CD4-positive, alpha-beta T cell (primary cell): ENCODE measurements at regions of chr1 and their contacts with region 1.

Region 1: DNA sequence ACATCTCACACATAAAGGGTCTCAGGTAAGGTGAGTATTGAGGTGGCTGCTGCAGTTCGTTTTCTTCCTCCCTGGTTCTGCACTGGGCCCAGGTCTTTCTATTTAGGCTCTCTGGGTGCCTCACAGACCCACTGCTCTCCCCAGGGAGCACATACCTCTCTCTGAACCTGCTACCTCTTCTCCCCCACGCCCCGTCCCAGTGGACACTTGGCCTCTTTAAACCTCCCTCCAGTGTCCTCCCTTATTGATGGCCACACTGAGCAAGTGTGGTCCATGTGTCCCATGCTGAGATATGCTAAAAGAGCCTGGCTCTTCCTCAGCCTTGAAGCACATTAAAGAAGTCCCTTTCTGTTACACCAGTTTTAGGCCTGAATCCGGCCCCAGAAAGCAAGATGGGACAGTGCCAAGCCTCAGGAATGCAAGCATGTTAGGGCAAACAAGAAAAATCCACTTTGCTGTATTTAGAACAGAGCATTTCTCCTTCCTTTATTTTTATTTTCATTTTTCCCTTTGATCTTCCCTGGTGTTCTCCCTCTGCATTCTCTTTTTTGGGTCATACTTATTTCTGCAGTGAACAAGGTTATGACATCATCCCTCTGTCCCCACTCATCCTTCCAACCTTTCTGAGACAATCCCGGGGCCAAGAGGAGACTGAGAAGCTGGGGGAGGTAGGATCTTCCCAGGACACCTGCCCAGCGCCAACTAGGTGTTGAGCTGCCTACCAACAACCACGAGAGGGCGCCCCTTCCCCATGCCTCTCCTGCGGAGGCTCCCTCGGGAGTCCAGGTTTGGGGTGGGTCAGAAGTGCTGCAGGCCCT is 5.0 kb upstream of the CHI3L2 start:
- DNase-seq: peak; percentile 59 to 90 (median 74)
- ATAC-seq: peak; percentile 21
- H3K4me3 ChIP-seq: peak overlapping the region; percentile 42
- H3K4me3 Mint-ChIP-seq: peak overlapping the region; percentile 85
- H3K27ac ChIP-seq: peak overlapping the region; percentile 70 to 88
- H3K27ac Mint-ChIP-seq: peak overlapping the region; percentile 98
- H3K4me1 ChIP-seq: peaks cover 91% of the 10 kb centered on the region
- H3K4me1 Mint-ChIP-seq: peaks cover 97% of the 10 kb centered on the region
- H3K27me3 ChIP-seq: no peaks in the 10 kb centered on the region
- H3K27me3 Mint-ChIP-seq: no peaks in the 10 kb centered on the region
- CTCF ChIP-seq: peak; percentile 93

Region 2: GRCh38 chr1:110936567-110936966 is 285.9 kb before region 1 on chr1:
- CTCF ChIA-PET with region 1: no interaction called
- POLR2A ChIA-PET with region 1: no interaction called
- intact Hi-C with region 1: no loop called
- DNase-seq: no peak
- ATAC-seq: no peak
- H3K4me3 ChIP-seq: no peak overlapping the region
- H3K4me3 Mint-ChIP-seq: no peak overlapping the region
- H3K27ac ChIP-seq: no peak overlapping the region
- H3K27ac Mint-ChIP-seq: no peak overlapping the region
- H3K4me1 ChIP-seq: no peaks in the 10 kb centered on the region
- H3K4me1 Mint-ChIP-seq: no peaks in the 10 kb centered on the region
- H3K27me3 ChIP-seq: no peaks in the 10 kb centered on the region
- H3K27me3 Mint-ChIP-seq: no peaks in the 10 kb centered on the region
- CTCF ChIP-seq: no peak

Region 3: GRCh38 chr1:111030590-111030989 is 191.9 kb before region 1 on chr1:
- CTCF ChIA-PET with region 1: no interaction called
- POLR2A ChIA-PET with region 1: no interaction called
- intact Hi-C with region 1: loop called in 1 of 2 experiments (anchors 2 kb)
- DNase-seq: peak in 13 of 14 experiments; percentile 7 to 79 (median 29)
- ATAC-seq: no peak
- H3K4me3 ChIP-seq: no peak overlapping the region
- H3K4me3 Mint-ChIP-seq: no peak overlapping the region
- H3K27ac ChIP-seq: no peak overlapping the region
- H3K27ac Mint-ChIP-seq: no peak overlapping the region
- H3K4me1 ChIP-seq: no peaks in the 10 kb centered on the region
- H3K4me1 Mint-ChIP-seq: peaks cover 5% of the 10 kb centered on the region
- H3K27me3 ChIP-seq: no peaks in the 10 kb centered on the region
- H3K27me3 Mint-ChIP-seq: peaks cover 17% of the 10 kb centered on the region
- CTCF ChIP-seq: peak; percentile 96

Region 4: DNA sequence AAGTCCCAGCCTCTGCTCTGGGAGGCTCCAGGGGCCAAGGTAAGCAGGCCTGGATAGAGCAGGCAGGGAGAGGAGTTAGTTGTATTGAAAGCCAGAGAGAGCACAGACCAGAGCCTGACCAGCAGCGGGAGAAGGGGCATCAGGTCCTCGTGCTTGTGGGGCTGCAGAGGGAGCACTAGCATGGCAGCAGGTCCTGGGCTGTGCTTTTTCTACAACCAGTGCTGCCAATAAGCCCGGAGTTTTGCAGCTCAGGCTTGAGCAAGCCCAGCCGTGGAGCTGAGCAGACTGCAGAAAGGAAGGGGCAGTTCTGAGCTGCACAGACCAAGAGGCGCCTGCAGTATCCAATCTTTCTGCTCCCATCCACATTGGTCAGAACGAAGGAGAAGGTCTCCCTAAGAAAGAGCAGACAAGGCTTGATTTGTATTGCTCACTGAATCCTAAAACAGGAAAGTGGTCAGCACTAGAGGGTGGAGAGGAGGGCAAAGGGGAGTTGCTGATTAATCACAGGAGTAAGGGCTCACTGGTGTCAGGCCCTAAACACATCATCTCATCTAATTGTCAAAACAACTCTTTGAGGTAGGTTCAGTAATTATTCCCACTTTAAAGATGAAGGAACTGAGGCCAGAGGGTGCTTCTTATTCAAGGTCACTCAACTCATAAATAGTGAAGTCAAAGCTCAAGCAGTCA is 24.8 kb before region 1 on chr1:
- CTCF ChIA-PET with region 1: interaction called, 135 read pairs
- POLR2A ChIA-PET with region 1: interaction called, 756 read pairs
- intact Hi-C with region 1: loop called in 1 of 2 experiments (anchors 2 kb)
- DNase-seq: peak in 13 of 14 experiments; percentile 49 to 91 (median 73)
- ATAC-seq: no peak
- H3K4me3 ChIP-seq: peak overlapping the region; percentile 79
- H3K4me3 Mint-ChIP-seq: peak overlapping the region; percentile 99
- H3K27ac ChIP-seq: peak overlapping the region; percentile 70 to 97
- H3K27ac Mint-ChIP-seq: peak overlapping the region; percentile 90
- H3K4me1 ChIP-seq: peaks cover 86% of the 10 kb centered on the region
- H3K4me1 Mint-ChIP-seq: peaks cover 88% of the 10 kb centered on the region
- H3K27me3 ChIP-seq: no peaks in the 10 kb centered on the region
- H3K27me3 Mint-ChIP-seq: no peaks in the 10 kb centered on the region
- CTCF ChIP-seq: no peak

Region 5: GRCh38 chr1:111346089-111346885 is 123.8 kb after region 1 on chr1:
- CTCF ChIA-PET with region 1: interaction called, 3 read pairs
- POLR2A ChIA-PET with region 1: interaction called, 7 read pairs
- intact Hi-C with region 1: loop called (anchors 5 kb)
- DNase-seq: peak; percentile 76 to 97 (median 86)
- ATAC-seq: peak; percentile 88
- H3K4me3 ChIP-seq: peak overlapping the region; percentile 71
- H3K4me3 Mint-ChIP-seq: peak overlapping the region; percentile 88
- H3K27ac ChIP-seq: peak overlapping the region; percentile 43 to 73
- H3K27ac Mint-ChIP-seq: peak overlapping the region; percentile 85
- H3K4me1 ChIP-seq: peaks cover 14% of the 10 kb centered on the region
- H3K4me1 Mint-ChIP-seq: peaks cover 29% of the 10 kb centered on the region
- H3K27me3 ChIP-seq: no peaks in the 10 kb centered on the region
- H3K27me3 Mint-ChIP-seq: no peaks in the 10 kb centered on the region
- CTCF ChIP-seq: peak; percentile 30

Region 6: GRCh38 chr1:111448918-111449702 is 226.6 kb after region 1 on chr1 and contains the starts of genes ATP5PB and WDR77:
- CTCF ChIA-PET with region 1: interaction called, 4 read pairs
- POLR2A ChIA-PET with region 1: no interaction called
- intact Hi-C with region 1: loop called in 1 of 2 experiments (anchors 2 kb)
- DNase-seq: peak; percentile 73 to 99 (median 84)
- ATAC-seq: peak; percentile 95
- H3K4me3 ChIP-seq: peak within 1 kb of the TSS; percentile 75
- H3K4me3 Mint-ChIP-seq: peak within 1 kb of the TSS; percentile 97
- H3K27ac ChIP-seq: peak within 1 kb of the TSS; percentile 75 to 93
- H3K27ac Mint-ChIP-seq: peak within 1 kb of the TSS; percentile 97
- H3K4me1 ChIP-seq: peaks cover 44% of the 10 kb centered on the region
- H3K4me1 Mint-ChIP-seq: peaks cover 92% of the 10 kb centered on the region
- H3K27me3 ChIP-seq: no peaks in the 10 kb centered on the region
- H3K27me3 Mint-ChIP-seq: no peaks in the 10 kb centered on the region
- CTCF ChIP-seq: no peak
- total RNA-seq, gene ATP5PB: 47.3 to 51.5 TPM
- total RNA-seq, gene WDR77: 12.4 to 15.1 TPM

Region 7: DNA sequence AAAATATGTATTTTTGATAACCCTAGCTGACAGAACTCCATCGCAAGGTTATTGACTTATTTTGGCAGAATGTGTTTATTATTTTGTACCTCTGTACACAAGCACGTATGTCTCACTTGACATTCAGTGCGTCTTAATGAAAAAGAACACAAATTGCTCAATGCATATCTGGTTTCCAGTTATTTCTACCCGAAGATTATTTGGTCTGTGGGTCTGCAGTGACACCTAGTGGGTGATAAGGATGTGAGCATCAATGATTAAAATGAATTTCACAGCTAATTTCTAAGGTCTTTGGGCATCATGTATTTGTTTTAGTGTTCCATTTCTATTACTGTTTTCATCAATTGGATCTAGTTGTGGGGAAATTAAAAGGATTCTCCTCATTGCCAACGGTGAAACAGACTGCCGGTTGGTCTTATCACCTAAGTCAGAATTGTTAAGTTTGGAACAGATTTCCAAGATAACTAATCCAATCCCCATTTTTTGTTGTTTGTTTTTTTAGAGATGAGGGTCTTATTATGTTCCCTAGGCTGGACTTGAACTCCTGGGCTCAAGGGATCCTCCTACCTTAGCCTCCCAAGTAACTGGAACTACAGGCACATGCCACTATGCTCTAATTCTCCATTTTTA is 547.1 kb after region 1 on chr1:
- CTCF ChIA-PET with region 1: interaction called, 4 read pairs
- POLR2A ChIA-PET with region 1: no interaction called
- intact Hi-C with region 1: loop called (anchors 1 to 5 kb)
- DNase-seq: peak in 12 of 14 experiments; percentile 11 to 84 (median 42)
- ATAC-seq: peak; percentile 68
- H3K4me3 ChIP-seq: no peak overlapping the region
- H3K4me3 Mint-ChIP-seq: no peak overlapping the region
- H3K27ac ChIP-seq: no peak overlapping the region
- H3K27ac Mint-ChIP-seq: peak overlapping the region; percentile 40
- H3K4me1 ChIP-seq: no peaks in the 10 kb centered on the region
- H3K4me1 Mint-ChIP-seq: peaks cover 9% of the 10 kb centered on the region
- H3K27me3 ChIP-seq: no peaks in the 10 kb centered on the region
- H3K27me3 Mint-ChIP-seq: no peaks in the 10 kb centered on the region
- CTCF ChIP-seq: peak; percentile 82